ENCODE measurements at regions of chr15 and their contacts with region 1.

Region 1: GRCh38 chr15:43204016-43204901 is 16.6 kb downstream of the EPB42 start:
- DNase-seq: peak; percentile 85
- H3K4me3 Mint-ChIP-seq: no peak overlapping the region
- H3K27ac Mint-ChIP-seq: no peak overlapping the region
- H3K4me1 Mint-ChIP-seq: peaks cover 12% of the 10 kb centered on the region
- H3K27me3 Mint-ChIP-seq: peaks cover 13% of the 10 kb centered on the region

Region 2: GRCh38 chr15:42704492-42704926 is 499.8 kb before region 1 on chr15:
- intact Hi-C with region 1: loop called (anchors 5 kb)
- DNase-seq: peak; percentile 90
- H3K4me3 Mint-ChIP-seq: no peak overlapping the region
- H3K27ac Mint-ChIP-seq: no peak overlapping the region
- H3K4me1 Mint-ChIP-seq: peaks cover 7% of the 10 kb centered on the region
- H3K27me3 Mint-ChIP-seq: no peaks in the 10 kb centered on the region

Region 3: DNA sequence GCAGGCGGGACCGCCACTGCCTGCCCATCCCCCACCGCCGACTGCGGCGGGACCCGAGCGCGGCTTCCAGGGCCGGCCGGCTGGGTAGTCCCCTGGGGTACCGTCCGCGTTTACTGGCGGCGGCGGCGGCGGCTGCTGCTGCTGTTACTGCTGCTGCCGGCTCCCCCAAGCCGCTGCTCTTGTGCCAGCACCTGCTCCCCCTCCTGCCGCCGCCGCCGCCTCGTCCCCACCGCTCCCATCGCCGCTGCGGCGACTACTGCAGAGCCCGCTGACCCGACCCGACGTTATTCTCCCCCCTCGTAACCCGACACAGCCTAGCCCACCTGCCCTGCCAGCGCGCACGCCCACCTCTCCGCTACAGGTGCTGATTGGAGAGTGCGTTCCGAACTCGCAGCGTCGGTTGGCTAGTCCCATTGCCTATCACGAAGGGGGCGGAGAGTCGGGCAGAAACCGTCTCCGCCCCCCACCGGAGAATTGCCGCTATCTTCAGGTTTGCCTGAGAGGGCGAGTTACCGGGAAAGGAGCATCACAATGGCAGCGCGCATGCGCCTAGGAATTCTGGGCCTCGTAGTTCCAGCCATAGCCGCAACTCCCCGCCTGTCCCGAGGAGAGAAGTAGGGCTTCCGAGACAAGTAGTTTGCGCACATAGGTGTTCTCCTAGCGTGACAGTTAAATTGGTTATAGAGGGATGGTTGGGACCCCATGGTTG is 283.6 kb before region 1 on chr15 and contains the start of gene TTBK2:
- intact Hi-C with region 1: no loop called
- DNase-seq: peak; percentile 99
- H3K4me3 Mint-ChIP-seq: peak within 1 kb of the TSS; percentile 99
- H3K27ac Mint-ChIP-seq: peak within 1 kb of the TSS; percentile 94
- H3K4me1 Mint-ChIP-seq: peaks cover 26% of the 10 kb centered on the region
- H3K27me3 Mint-ChIP-seq: no peaks in the 10 kb centered on the region
- total RNA-seq, gene TTBK2: 10.2 and 11.3 TPM in 2 replicates

Region 4: GRCh38 chr15:43465105-43465504 is 260.8 kb after region 1 on chr15:
- intact Hi-C with region 1: no loop called
- DNase-seq: no peak
- H3K4me3 Mint-ChIP-seq: no peak overlapping the region
- H3K27ac Mint-ChIP-seq: no peak overlapping the region
- H3K4me1 Mint-ChIP-seq: no peaks in the 10 kb centered on the region
- H3K27me3 Mint-ChIP-seq: no peaks in the 10 kb centered on the region